ENCODE measurements at regions of chr9 and their contacts with region 1.

Region 1: DNA sequence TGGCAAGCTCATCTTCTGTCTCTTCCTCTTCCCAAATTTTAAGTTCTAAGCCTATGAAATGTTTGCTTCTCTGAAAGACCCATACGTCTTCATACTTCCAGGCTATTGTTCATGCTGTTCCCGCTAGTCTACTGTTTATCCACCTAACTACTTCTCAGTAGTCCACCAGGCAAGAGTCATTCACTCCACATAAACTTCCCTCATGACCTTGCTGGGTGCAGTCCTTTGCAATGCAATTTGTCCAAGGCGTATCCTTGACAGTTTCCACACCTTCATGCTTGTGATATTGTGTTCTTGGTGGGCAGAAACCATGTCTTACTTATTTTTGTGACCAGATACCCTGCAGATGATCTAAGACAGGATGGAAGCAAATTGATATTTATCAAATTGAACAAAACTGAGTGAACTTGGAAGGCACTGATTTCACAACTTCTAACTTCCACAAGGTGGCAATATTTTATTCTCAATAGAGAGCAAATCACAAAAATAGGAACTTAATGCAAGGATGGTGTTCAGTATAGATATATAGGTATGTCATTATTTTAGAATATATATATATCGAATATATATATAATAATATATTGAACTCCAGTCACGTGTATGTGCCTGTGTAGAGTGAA is 30.3 kb downstream of the TYRP1 start:
- DNase-seq: no peak
- H3K4me3 ChIP-seq: no peak overlapping the region
- H3K27ac ChIP-seq: no peak overlapping the region
- H3K4me1 ChIP-seq: peaks cover 0 to 10% (median 7%) of the 10 kb centered on the region in 4 donors
- H3K27me3 ChIP-seq: no peaks in the 10 kb centered on the region
- CTCF ChIP-seq: peak; percentile 52 to 69 (median 59)
- EP300 ChIP-seq: no peak
- POLR2A ChIP-seq: no peak

Region 2: DNA sequence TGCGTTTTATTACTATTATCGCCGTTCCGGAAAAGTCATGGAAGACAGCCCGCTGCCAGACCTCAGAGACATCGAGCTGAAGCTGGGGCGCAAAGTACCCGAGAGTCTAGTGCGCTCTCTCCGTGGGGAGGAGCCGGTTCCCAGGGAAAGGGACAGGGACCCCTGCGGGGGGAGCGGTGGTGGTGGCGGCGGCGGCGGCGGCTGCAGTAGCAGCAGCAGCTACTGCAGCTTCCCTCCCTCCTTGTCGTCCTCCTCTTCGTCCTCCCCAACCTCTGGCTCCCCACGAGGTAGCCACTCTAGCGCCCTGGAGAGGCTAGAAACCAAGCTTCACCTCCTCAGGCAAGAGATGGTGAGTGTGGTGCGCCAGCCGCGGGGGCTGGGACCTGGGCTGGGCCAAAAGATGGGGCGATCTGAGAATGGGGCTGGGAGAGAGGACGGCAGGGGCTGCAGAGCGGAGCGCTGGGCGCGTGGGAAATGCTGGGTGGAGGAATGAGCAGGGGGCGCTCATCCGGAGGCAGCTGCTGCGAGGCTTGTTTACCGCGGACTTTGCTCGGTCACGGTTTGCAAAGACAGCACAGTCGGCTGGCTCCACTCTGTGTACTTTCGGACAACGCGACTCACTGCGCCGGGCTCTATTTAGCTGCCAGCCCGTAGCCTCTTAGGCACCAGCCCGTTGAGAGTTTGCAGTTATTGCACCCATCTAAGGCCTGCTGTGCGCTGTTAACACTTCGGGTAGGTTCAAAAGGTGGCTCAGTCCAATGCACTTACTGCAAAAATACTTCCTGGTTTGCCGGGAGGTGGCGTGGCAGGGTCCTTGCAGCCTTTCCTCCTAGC is 52.4 kb after region 1 on chr9:
- intact Hi-C with region 1: loop called (anchors 2 kb)
- DNase-seq: no peak
- H3K4me3 ChIP-seq: peak overlapping the region; percentile 76 to 89 (median 83)
- H3K27ac ChIP-seq: peak overlapping the region; percentile 86 to 94 (median 90)
- H3K4me1 ChIP-seq: peaks cover 5 to 47% (median 38%) of the 10 kb centered on the region in 4 donors
- H3K27me3 ChIP-seq: no peaks in the 10 kb centered on the region
- CTCF ChIP-seq: peak; percentile 54 to 60 (median 58)
- EP300 ChIP-seq: no peak
- POLR2A ChIP-seq: no peak

Region 3: DNA sequence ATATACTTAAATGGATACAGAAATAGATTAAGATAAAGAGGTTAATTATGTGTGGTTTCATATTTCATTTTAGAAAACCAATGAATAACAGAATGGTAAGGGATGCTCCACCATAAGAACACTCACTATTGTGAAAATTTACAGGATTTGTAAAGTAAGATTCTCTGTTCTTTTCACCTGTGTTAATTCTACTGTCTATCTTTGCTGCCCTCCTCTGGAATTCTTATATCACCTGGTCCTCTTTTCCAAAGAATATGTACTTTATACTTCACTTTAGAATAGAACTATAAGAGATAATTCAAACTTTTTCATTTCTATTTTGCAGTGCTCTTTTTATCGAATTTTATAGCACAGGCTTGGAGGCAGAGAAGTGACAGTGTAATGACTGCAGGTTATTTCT is 264.7 kb after region 1 on chr9:
- intact Hi-C with region 1: loop called (anchors 10 kb)
- DNase-seq: no peak
- H3K4me3 ChIP-seq: no peak overlapping the region
- H3K27ac ChIP-seq: no peak overlapping the region
- H3K4me1 ChIP-seq: no peaks in the 10 kb centered on the region
- H3K27me3 ChIP-seq: no peaks in the 10 kb centered on the region
- CTCF ChIP-seq: peak in 1 of 3 experiments; percentile 18
- EP300 ChIP-seq: no peak
- POLR2A ChIP-seq: no peak

Region 4: GRCh38 chr9:13088720-13089427 is 365.4 kb after region 1 on chr9:
- intact Hi-C with region 1: loop called (anchors 2 kb)
- DNase-seq: no peak
- H3K4me3 ChIP-seq: peak overlapping the region in 2 of 4 donors; percentile 3 to 23
- H3K27ac ChIP-seq: no peak overlapping the region
- H3K4me1 ChIP-seq: peaks cover 0 to 22% (median 8%) of the 10 kb centered on the region in 4 donors
- H3K27me3 ChIP-seq: no peaks in the 10 kb centered on the region
- CTCF ChIP-seq: peak; percentile 54 to 74 (median 74)
- EP300 ChIP-seq: no peak
- POLR2A ChIP-seq: no peak